ENCODE measurements at regions of chr16 and their contacts with region 1.

Region 1: GRCh38 chr16:57648590-57649442 is 19.3 kb upstream of the ADGRG3 start:
- DNase-seq: no peak
- H3K4me3 ChIP-seq: no peak overlapping the region
- CTCF ChIP-seq: peak; percentile 100

Region 2: GRCh38 chr16:57576429-57576870 is 72.4 kb before region 1 on chr16:
- CTCF ChIA-PET with region 1: interaction called, 181 read pairs
- POLR2A ChIA-PET with region 1: no interaction called
- DNase-seq: no peak
- H3K4me3 ChIP-seq: no peak overlapping the region
- CTCF ChIP-seq: peak; percentile 85

Region 3: DNA sequence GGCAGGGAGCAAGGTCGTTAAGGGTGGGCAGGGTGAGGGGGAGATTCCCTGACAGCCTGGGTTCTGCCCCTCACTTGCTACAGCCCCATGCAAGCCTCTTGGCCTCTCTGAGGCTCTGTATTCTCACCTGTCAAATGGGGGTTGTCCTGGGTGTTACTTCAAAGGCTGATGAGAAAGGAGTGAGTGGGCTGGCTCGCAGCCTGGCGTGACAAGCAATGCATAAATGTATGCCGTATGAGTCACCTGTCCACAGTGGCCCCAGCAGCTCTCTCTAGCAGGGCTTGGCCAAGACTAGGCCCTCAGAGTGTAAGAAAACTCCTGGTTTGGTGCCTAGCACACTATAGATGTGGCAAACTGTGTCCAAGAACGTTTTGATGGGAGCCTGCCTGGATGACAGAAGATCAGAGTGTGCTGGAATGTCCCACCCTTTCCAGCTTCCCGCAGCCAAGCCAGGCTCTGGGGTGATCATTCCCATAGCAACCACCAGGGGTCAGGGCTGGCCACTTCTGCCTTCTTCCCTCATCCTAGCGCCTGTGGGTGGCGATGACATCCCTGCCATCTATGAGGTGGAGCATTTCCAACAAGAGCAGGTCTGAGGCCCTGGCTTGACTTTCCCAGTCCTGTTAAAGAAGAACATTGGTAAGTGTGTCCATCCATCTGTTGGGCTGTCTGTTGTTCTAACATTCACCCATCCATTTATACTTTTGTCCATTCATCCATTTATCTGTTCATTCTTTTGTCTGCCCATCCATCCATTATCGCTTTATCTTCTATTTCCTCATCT is 57.5 kb before region 1 on chr16:
- CTCF ChIA-PET with region 1: interaction called, 256 read pairs
- POLR2A ChIA-PET with region 1: no interaction called
- DNase-seq: no peak
- H3K4me3 ChIP-seq: no peak overlapping the region; the same call in 1 of the 2 replicates
- CTCF ChIP-seq: peak; percentile 91

Region 4: GRCh38 chr16:57628008-57628781 is 20.6 kb before region 1 on chr16 and contains the start of gene ADGRG1:
- CTCF ChIA-PET with region 1: interaction called, 30 read pairs
- POLR2A ChIA-PET with region 1: no interaction called
- DNase-seq: peak; percentile 71
- H3K4me3 ChIP-seq: peak within 1 kb of the TSS; percentile 54
- CTCF ChIP-seq: peak; percentile 16

Region 5: DNA sequence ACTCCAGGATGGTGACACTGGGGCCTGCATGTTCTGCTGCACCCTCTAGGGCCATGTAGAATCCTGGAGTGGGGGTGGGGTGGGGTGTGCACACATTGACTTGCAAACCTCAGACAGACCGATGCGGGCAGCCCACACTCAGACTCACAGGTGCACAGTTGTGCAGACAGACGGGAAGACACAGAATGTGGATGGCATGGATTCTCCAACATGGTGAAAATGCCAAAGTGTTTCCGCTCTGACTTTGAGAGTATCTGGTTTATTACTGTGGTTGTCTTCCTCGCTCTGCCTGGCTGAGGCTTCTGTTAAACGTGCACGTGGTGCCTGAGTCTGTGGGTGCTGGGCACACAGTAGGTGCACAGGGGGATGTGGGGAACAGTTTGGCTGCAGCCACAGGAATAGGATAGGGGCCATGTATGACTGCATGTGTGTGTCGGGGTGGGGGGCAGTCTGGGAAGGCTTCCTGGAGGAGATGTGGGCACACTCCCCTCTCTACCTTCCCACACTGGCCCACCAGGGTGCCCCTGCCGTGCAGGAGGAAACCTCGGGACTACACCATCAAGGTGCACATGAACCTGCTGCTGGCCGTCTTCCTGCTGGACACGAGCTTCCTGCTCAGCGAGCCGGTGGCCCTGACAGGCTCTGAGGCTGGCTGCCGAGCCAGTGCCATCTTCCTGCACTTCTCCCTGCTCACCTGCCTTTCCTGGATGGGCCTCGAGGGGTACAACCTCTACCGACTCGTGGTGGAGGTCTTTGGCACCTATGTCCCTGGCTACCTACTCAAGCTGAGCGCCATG is 10.3 kb after region 1 on chr16:
- CTCF ChIA-PET with region 1: interaction called, 19 read pairs
- POLR2A ChIA-PET with region 1: no interaction called
- DNase-seq: no peak
- H3K4me3 ChIP-seq: no peak overlapping the region
- CTCF ChIP-seq: no peak

Region 6: GRCh38 chr16:57672824-57673223 is 24.0 kb after region 1 on chr16:
- CTCF ChIA-PET with region 1: interaction called, 26 read pairs
- POLR2A ChIA-PET with region 1: no interaction called
- DNase-seq: no peak
- H3K4me3 ChIP-seq: no peak overlapping the region
- CTCF ChIP-seq: no peak

Region 7: DNA sequence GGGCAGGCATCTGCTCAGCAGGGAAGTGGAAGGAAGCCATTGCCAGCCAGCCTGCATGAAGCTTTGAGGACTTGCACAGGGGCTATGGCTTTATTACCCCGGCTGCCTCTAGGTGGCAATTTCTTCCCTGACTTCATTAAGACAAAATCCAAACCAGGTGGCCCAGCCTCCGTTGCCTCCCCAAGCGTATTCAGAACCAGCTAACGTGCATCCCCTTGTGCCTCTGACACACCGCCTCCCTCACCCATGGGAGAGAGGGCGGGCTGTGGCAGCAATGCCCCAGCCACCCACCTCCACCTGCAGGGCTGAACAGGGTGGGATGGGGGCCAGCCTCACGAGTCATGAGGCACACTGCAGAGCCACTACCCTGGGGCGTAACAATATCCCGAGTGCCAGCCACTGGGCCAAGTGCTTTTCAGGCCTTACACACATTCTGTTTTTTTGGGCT is 146.6 kb after region 1 on chr16:
- CTCF ChIA-PET with region 1: no interaction called
- POLR2A ChIA-PET with region 1: no interaction called
- DNase-seq: no peak
- H3K4me3 ChIP-seq: no peak overlapping the region
- CTCF ChIP-seq: peak; percentile 51

Measured in AG04449 (cell line).